ENCODE measurements at regions of chr11 and their contacts with region 1.

Region 1: DNA sequence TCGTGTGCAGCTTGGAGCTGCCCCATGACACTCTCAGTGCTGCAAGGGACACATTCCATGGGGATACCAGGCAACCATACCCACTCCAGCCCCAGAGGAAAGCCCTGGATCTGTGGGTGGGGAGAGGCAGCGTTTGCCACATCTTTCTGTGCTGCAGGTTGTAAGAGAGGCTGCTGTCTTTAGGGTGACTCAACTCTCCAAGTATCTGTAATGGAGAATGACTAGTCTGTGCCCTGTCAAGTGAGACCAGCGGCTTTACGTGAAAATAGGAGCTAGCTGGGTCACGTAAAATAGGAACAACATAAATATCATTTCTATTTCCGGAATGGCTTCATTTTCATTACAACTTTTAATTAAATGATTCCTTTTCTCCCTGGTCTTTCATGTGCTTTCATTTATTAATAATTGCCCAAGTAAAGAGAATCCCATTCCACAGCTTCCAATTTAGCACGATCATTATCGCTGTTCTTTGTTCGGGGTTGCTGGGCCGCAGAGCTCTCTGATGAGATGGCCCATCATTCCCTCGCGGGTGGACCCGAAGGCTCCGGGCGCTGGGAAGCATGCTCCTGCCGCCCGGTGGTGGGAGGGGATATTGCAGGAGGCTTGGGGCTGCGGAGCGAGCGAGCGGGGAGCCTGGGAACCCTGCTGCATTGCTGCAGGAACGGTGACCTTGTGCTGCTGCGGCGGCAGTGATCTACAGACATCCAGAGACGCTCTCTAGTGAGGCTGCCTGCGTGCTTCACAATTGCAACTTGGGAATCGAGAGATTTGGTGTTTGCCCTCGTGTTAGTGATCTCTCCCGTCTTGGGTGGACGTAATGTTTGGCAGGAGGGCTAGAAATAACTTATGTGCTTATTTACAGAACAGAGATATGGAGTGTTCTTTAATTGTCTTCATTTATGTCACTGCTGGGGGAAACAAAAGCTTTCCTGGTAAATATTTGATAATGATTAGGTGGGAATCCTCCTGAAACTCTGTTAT is 10.6 kb downstream of the SLC6A5 start:
- DNase-seq: peak; percentile 74
- ATAC-seq: peak; percentile 89

Region 2: GRCh38 chr11:20387241-20388095 is 222.5 kb before region 1 on chr11 and contains the start of gene PRMT3:
- intact Hi-C with region 1: loop called (anchors 2 kb)
- DNase-seq: peak; percentile 98
- ATAC-seq: peak; percentile 98
- total RNA-seq, gene PRMT3: 13.3 TPM

Region 3: GRCh38 chr11:20397281-20397680 is 212.7 kb before region 1 on chr11:
- intact Hi-C with region 1: loop called (anchors 1 kb)
- DNase-seq: no peak
- ATAC-seq: peak; percentile 44